Psoas muscle (tissue), 8 donors: ENCODE measurements at regions of chr14 and their contacts with region 1.

Region 1: DNA sequence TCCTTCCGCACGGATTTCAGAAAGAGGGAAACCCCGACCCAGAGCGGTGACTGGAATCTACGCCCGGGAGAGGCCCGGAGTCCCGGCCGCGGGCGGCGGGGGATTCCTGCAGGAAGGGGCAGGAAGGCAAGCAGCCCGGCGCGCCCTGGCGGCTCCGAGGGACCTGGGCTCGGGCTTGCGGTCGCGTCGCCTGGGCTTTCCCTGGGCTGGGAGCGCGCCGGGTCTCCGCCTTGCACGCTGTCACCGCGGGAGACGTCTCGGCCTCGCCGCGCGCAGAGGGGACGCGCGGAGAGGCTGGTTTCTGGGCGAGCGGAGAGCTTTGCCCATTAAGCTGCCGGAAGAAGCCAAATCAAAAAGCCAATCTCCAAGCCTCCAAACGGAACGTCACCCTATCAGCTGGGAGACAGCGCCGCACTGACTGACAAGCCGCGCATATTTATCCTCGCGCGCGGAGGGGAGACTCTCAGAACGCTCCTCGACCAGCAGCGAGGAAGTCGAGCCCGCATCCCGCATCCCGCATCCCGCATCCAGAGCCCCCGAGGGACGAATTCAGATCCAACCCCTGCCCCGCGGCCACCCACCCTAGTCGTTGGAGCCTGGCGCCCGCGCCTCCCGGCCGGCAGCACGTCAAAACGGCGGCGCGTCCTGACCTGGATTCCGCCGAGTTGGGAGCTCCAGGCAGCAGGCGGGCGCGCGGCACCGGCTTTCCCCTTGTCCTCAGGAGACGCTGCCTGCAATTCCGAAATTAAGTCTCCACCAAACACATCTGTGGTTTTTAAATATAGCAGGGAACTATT is at the start of gene SLC8A3:
- DNase-seq: peak; percentile 59 to 86
- ATAC-seq: peak; percentile 68 to 71 (median 70)
- H3K4me3 ChIP-seq: peak within 1 kb of the TSS; percentile 91
- H3K27ac ChIP-seq: peak within 1 kb of the TSS; percentile 98
- H3K4me1 ChIP-seq: peaks cover 47% of the 10 kb centered on the region
- H3K27me3 ChIP-seq: no peaks in the 10 kb centered on the region
- CTCF ChIP-seq: no peak
- total RNA-seq, gene SLC8A3: 18.0 to 53.6 (median 26.8) TPM

Region 2: DNA sequence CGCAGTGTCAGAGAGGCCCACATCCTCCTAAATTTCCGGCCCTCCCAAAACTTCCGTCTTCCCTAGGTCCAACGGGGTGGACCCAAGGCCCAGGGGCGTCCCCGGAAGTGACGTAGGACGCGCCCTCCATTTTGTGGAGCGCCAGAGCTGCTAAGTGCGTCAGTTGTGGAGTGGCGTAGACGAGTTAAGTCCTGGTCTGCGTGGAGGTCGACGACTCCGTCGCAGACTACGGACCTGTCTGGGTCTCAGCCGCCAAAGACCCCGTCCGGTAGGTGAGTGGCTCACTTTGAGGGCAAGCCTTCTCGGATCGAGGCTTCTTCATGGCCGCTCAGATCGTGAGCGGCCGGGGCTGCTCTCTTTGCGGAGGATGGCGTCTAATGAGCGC is 421.9 kb before region 1 on chr14 and contains the start of gene SRSF5:
- intact Hi-C with region 1: loop called in 1 of 2 experiments (anchors 2 kb)
- DNase-seq: peak; percentile 95 to 97
- ATAC-seq: peak; percentile 92 to 94 (median 92)
- H3K4me3 ChIP-seq: peak within 1 kb of the TSS; percentile 97
- H3K27ac ChIP-seq: peak within 1 kb of the TSS; percentile 100
- H3K4me1 ChIP-seq: peaks cover 36% of the 10 kb centered on the region
- H3K27me3 ChIP-seq: no peaks in the 10 kb centered on the region
- CTCF ChIP-seq: no peak
- total RNA-seq, gene SRSF5: 95.6 to 171 (median 104) TPM

Region 3: GRCh38 chr14:70139384-70139783 is 49.5 kb before region 1 on chr14:
- intact Hi-C with region 1: no loop called
- DNase-seq: no peak
- ATAC-seq: no peak
- H3K4me3 ChIP-seq: no peak overlapping the region
- H3K27ac ChIP-seq: no peak overlapping the region
- H3K4me1 ChIP-seq: no peaks in the 10 kb centered on the region
- H3K27me3 ChIP-seq: no peaks in the 10 kb centered on the region
- CTCF ChIP-seq: no peak

Region 4: GRCh38 chr14:70152704-70153103 is 36.2 kb before region 1 on chr14:
- intact Hi-C with region 1: loop called in 1 of 2 experiments (anchors 5 kb)
- DNase-seq: no peak
- ATAC-seq: no peak
- H3K4me3 ChIP-seq: no peak overlapping the region
- H3K27ac ChIP-seq: no peak overlapping the region
- H3K4me1 ChIP-seq: peaks cover 48% of the 10 kb centered on the region
- H3K27me3 ChIP-seq: no peaks in the 10 kb centered on the region
- CTCF ChIP-seq: no peak